Panc1 (cell line): ENCODE measurements at regions of chr19 and their contacts with region 1.

Region 1: DNA sequence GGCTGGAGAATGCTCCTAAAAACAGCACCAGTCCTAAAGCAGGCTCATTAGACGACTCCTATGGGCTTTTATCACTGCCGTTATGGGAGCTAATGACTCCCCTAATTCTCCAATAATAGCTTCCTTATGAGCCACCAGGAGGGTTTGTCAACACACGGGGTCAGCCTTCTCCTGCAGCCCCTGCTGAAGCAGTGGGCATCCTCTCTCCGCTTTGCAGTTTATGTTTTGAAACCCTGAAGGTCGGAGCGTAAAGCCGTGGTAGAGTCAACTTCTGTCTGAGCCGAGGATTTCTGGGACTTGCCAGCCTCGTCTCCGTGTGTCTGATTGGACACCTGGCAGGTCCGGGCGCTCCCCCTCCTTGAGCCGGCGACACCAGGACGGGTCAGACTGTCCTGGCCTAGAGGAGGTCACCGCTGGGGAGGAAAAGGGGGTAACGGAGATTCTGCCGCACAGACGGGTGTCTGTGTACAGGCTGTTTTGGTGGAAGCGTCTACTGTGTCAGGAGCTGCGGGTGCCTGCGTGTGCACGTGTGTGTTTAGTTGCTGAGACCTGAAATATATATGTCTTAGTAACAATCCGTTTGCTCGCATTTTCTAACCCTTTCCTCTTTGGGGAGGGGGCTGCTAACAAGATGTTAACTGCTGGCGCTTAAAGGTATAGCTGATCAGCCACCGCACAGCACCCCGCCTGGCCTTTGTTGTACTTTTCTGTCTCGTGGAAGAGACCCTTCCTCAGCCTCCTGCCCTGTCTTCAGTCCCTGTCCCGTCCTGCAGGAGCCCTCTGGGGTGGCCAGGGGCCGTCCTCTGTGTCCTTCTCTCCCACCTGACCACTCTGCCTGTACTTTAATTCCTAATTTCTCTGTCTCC is 1.9 kb downstream of the KDM4B start:
- DNase-seq: peak; percentile 5
- ATAC-seq: peak; percentile 9; the same call in 1 of the 2 replicates
- H3K4me3 ChIP-seq: peak overlapping the region; percentile 59 to 71
- H3K27ac ChIP-seq: peak overlapping the region; percentile 26
- H3K4me1 ChIP-seq: peaks cover 24% of the 10 kb centered on the region
- H3K27me3 ChIP-seq: no peaks in the 10 kb centered on the region
- CTCF ChIP-seq: no peak

Region 2: DNA sequence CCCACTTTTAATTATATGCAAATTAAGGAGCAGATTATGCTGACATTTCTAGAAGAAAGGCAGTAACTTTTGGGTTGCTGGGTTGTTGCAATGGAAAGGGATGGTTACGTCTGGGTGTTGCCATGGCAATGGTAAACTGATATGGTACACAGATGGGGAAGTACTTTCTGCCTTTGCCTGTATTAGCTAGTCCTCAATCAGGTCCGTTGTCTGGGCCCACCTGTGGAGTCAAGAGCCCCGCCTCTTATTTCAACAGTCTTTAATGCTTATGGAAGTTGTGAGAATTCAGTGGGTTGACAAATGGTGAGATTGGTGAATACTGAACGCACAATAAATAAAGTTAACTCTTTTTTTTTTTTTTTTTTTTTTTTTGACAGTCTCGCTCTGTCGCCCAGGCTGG is 216.5 kb before region 1 on chr19:
- CTCF ChIA-PET with region 1: no interaction called
- POLR2A ChIA-PET with region 1: interaction called, 11 read pairs
- in situ Hi-C with region 1: no loop called
- intact Hi-C with region 1: no loop called
- DNase-seq: no peak
- ATAC-seq: no peak
- H3K4me3 ChIP-seq: no peak overlapping the region
- H3K27ac ChIP-seq: no peak overlapping the region
- H3K4me1 ChIP-seq: no peaks in the 10 kb centered on the region
- H3K27me3 ChIP-seq: no peaks in the 10 kb centered on the region
- CTCF ChIP-seq: no peak